ENCODE measurements at regions of chr16 and their contacts with region 1.

Region 1: GRCh38 chr16:50266337-50267091 is at the start of gene ADCY7:
- DNase-seq: peak; percentile 75 to 90 (median 80)
- H3K4me3 ChIP-seq: peak within 1 kb of the TSS; percentile 98
- H3K4me3 Mint-ChIP-seq: peak within 1 kb of the TSS; percentile 94 to 99 (median 97)
- H3K27ac ChIP-seq: peak within 1 kb of the TSS; percentile 89
- H3K27ac Mint-ChIP-seq: peak within 1 kb of the TSS; percentile 96 to 99 (median 98)
- H3K4me1 ChIP-seq: peaks cover 49% of the 10 kb centered on the region
- H3K4me1 Mint-ChIP-seq: peaks cover 60 to 81% (median 75%) of the 10 kb centered on the region in 3 donors
- H3K27me3 ChIP-seq: no peaks in the 10 kb centered on the region
- H3K27me3 Mint-ChIP-seq: peaks cover 0 to 1% of the 10 kb centered on the region in 2 donors
- total RNA-seq, gene ADCY7: 76.6 to 83.4 TPM

Region 2: DNA sequence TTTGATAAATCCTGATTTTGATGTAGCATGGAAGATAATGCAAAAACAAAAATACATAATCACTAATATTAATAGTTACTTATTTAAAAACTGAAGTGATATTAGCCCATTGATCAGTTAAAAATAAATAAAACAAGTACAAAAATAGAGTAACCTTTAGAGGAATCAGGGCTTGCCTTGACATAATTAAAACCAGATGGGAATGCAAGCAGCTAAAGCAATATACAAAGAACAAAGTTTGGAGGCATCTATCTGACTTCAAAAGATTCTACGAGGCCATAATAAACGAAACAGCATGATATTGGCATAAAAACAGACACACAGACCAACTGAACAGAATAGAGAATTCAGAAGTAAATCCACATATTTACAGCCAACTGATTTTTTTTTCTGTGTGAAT is 215.7 kb before region 1 on chr16:
- CTCF ChIA-PET with region 1: no interaction called
- POLR2A ChIA-PET with region 1: no interaction called
- DNase-seq: no peak
- H3K4me3 ChIP-seq: no peak overlapping the region
- H3K4me3 Mint-ChIP-seq: no peak overlapping the region
- H3K27ac ChIP-seq: no peak overlapping the region
- H3K27ac Mint-ChIP-seq: no peak overlapping the region
- H3K4me1 ChIP-seq: no peaks in the 10 kb centered on the region
- H3K4me1 Mint-ChIP-seq: no peaks in the 10 kb centered on the region
- H3K27me3 ChIP-seq: no peaks in the 10 kb centered on the region
- H3K27me3 Mint-ChIP-seq: peaks cover 11 to 20% of the 10 kb centered on the region in 2 donors

Region 3: DNA sequence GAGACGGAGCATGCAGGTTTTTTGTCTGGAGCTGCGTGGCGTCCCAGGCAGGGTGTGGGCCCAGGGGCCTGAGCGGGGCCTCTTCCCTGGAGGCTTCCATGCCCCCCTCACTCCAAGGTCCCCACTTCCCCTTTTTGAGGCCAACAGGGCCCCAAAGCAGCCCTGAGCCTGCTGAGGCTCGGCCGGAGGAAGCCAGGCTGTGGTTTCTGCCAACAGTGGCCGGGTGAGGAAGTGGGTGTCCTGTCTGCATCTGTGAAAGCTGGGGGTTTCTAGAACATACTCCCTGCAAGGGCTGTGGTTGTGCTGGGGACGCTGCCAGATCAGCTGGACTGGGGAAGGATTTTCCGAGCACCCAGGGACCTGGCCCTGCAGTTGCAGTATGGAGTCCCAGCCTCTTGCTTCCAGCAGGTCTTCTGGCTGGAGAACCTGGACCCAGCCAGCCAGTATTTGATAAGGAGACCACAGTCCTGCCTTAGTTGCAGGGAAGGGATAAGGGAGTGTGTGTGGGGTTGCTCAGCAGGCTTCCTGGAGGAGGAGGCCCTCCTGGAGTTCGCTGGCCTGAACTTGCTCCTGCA is 15.5 kb after region 1 on chr16:
- CTCF ChIA-PET with region 1: interaction called, 48 read pairs
- POLR2A ChIA-PET with region 1: interaction called, 5 read pairs
- DNase-seq: peak; percentile 45 to 80 (median 59)
- H3K4me3 ChIP-seq: peak overlapping the region; percentile 53
- H3K4me3 Mint-ChIP-seq: peak overlapping the region; percentile 71 to 85 (median 82)
- H3K27ac ChIP-seq: peak overlapping the region; percentile 57
- H3K27ac Mint-ChIP-seq: peak overlapping the region; percentile 84 to 99 (median 93)
- H3K4me1 ChIP-seq: peaks cover 90% of the 10 kb centered on the region
- H3K4me1 Mint-ChIP-seq: peaks cover 87 to 96% (median 93%) of the 10 kb centered on the region in 3 donors
- H3K27me3 ChIP-seq: no peaks in the 10 kb centered on the region
- H3K27me3 Mint-ChIP-seq: no peaks in the 10 kb centered on the region